ENCODE measurements at regions of chr4 and their contacts with region 1.

Region 1: DNA sequence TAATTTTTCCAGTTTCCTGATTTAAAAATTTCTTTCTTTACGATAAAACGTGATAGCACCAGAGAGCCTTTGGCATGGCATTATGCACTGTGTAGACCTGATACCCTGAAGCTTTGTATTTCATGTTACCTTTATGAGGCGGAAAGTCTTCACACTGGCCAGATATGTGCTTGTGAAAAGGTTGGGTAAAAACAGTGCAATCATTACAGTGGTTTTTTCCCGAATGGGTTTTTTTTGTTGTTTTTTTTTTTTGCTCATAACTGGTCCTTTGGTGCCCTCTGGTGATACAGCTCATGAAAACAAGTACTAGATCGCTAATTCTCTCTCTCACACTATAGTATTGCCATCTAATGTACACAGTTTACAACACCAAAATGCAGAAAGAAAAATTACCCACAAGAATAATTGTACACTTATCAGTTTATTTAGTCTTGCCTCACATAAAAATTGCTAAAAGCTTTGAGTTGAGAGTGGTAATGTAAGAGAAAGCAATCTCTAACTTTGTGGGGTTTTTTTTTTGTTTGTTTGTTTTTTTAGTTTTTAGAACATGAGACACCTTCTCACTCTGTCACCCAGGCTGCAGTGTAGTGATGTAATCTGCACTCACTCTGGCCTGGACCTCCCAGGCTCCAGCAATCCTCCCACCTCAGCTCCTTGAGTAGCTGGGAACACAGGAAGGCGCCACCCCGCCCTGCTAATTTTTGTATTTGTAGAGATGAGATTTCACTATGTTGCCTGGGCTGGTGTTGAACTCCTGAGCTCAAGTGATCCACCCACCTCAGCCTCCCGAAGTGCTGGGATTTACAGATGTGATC is 21.3 kb downstream of the SPCS3 start:
- DNase-seq: peak; percentile 49 to 67 (median 64)
- H3K4me3 ChIP-seq: no peak overlapping the region
- H3K27ac ChIP-seq: no peak overlapping the region
- H3K4me1 ChIP-seq: peaks cover 0 to 3% (median 0%) of the 10 kb centered on the region in 4 experiments
- H3K27me3 ChIP-seq: no peaks in the 10 kb centered on the region

Region 2: DNA sequence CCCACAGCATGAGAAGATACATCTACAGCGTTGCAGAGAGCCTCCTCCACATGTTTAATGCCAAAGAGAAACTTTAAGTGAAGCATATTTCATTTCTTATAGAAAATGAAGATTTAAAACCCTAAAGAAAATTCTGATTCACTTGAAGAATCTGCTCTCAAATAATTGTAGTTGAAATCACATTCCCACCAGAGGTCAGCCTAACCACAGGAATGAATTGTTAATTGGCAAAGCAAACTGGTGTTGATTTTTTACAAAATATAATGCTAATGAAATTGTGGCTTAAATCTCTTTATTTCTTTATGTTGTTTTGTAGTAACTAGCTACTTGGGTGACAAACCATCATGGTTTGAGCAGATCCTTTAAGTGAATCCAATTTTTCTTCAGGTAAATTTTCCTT is 306.6 kb before region 1 on chr4:
- CTCF ChIA-PET with region 1: interaction called, 39 read pairs
- POLR2A ChIA-PET with region 1: no interaction called
- DNase-seq: peak; percentile 64 to 84 (median 74)
- H3K4me3 ChIP-seq: no peak overlapping the region
- H3K27ac ChIP-seq: no peak overlapping the region
- H3K4me1 ChIP-seq: peaks cover 0 to 4% (median 0%) of the 10 kb centered on the region in 4 experiments
- H3K27me3 ChIP-seq: no peaks in the 10 kb centered on the region

Region 3: GRCh38 chr4:176150356-176150682 is 190.8 kb before region 1 on chr4:
- CTCF ChIA-PET with region 1: interaction called, 17 read pairs
- POLR2A ChIA-PET with region 1: no interaction called
- DNase-seq: peak; percentile 22 to 52 (median 51)
- H3K4me3 ChIP-seq: no peak overlapping the region
- H3K27ac ChIP-seq: no peak overlapping the region
- H3K4me1 ChIP-seq: no peaks in the 10 kb centered on the region
- H3K27me3 ChIP-seq: no peaks in the 10 kb centered on the region

Region 4: GRCh38 chr4:176323511-176324160 is 17.4 kb before region 1 on chr4:
- CTCF ChIA-PET with region 1: interaction called, 10 read pairs
- POLR2A ChIA-PET with region 1: no interaction called
- DNase-seq: no peak
- H3K4me3 ChIP-seq: no peak overlapping the region
- H3K27ac ChIP-seq: no peak overlapping the region
- H3K4me1 ChIP-seq: peaks cover 2 to 43% (median 28%) of the 10 kb centered on the region in 4 experiments
- H3K27me3 ChIP-seq: no peaks in the 10 kb centered on the region